ENCODE measurements at regions of chr19 and their contacts with region 1.

Region 1: GRCh38 chr19:41821003-41821735 is 23.3 kb downstream of the LYPD4 start:
- DNase-seq: peak; percentile 70
- H3K4me3 ChIP-seq: no peak overlapping the region
- H3K27ac ChIP-seq: no peak overlapping the region
- H3K4me1 ChIP-seq: no peaks in the 10 kb centered on the region
- H3K27me3 ChIP-seq: peaks cover 38% of the 10 kb centered on the region; the same call in 1 of the 2 replicates
- CTCF ChIP-seq: peak; percentile 63
- EP300 ChIP-seq: no peak
- RAD21 ChIP-seq: peak; percentile 76

Region 2: GRCh38 chr19:41837981-41838708 is 17.0 kb after region 1 on chr19:
- CTCF ChIA-PET with region 1: interaction called, 48 read pairs
- POLR2A ChIA-PET with region 1: no interaction called
- DNase-seq: no peak
- H3K4me3 ChIP-seq: no peak overlapping the region
- H3K27ac ChIP-seq: no peak overlapping the region
- H3K4me1 ChIP-seq: no peaks in the 10 kb centered on the region
- H3K27me3 ChIP-seq: peaks cover 41% of the 10 kb centered on the region
- CTCF ChIP-seq: no peak
- EP300 ChIP-seq: no peak
- RAD21 ChIP-seq: no peak

Measured in SK-N-SH (cell line).